H1 (cell line): ENCODE measurements at regions of chr1 and their contacts with region 1.

Region 1: GRCh38 chr1:12244078-12244477 is 14.2 kb downstream of the VPS13D start:
- DNase-seq: peak in 1 of 2 experiments; percentile 46
- H3K4me3 ChIP-seq: no peak overlapping the region
- H3K27ac ChIP-seq: no peak overlapping the region
- H3K4me1 ChIP-seq: peaks cover 0 to 19% (median 6%) of the 10 kb centered on the region in 4 experiments; a peak in 5 of 7 replicates
- H3K27me3 ChIP-seq: no peaks in the 10 kb centered on the region
- CTCF ChIP-seq: peak in 2 of 3 experiments; percentile 49 to 63; a peak in 3 of 4 replicates
- EP300 ChIP-seq: no peak
- POLR2A ChIP-seq: no peak
- RAD21 ChIP-seq: peak; percentile 15 to 40; a peak in 2 of 4 replicates

Region 2: DNA sequence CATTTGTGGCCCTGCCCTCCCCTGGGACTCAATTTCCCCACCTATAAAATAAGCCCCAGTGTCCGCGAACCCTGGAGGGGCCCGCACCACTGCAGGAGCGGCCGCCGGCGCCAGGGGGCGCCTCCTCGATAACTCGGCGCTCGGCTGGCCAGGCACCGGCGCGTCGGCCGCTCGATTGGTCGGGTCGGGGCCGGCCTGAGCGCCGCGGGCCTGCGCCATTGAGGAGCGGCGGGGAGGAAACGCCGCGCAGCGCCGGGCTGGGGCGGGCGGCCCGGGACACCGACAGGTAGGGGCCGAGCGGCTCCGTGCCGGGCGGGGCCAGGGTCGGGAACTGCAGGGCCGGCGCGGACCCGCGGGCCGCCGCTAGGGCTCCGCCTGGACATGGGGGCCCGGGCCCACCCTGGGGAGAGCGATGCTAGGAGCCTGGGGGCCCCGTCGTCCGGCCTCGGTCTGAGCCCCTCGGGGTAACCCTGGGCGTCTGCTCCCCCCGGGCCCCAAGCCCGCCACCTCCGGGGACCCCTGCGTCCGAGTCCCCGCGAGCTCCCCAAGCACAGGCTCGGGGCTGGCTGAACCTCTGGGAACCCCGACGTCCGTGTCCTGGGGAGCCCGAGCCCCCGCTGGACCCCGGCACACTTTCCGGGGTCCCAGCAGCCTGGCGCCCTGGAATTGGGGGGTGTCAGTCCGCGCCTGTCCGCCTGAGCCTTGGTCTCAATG is 14.1 kb before region 1 on chr1 and contains the start of gene VPS13D:
- CTCF ChIA-PET with region 1: interaction called, 24 read pairs
- POLR2A ChIA-PET with region 1: no interaction called
- DNase-seq: peak; percentile 33 to 94
- H3K4me3 ChIP-seq: peak within 1 kb of the TSS; percentile 55 to 95 (median 66)
- H3K27ac ChIP-seq: no peak within 1 kb of the TSS
- H3K4me1 ChIP-seq: peaks cover 0 to 7% (median 3%) of the 10 kb centered on the region in 4 experiments; a peak in 4 of 7 replicates
- H3K27me3 ChIP-seq: no peaks in the 10 kb centered on the region; a peak in 1 of 7 replicates
- CTCF ChIP-seq: peak; percentile 83 to 92 (median 88)
- EP300 ChIP-seq: peak in 1 of 2 experiments; percentile 76; a peak in 1 of 3 replicates
- POLR2A ChIP-seq: no peak
- RAD21 ChIP-seq: no peak; a peak in 1 of 4 replicates
- total RNA-seq, gene VPS13D: 31.2 and 32.7 TPM in 2 replicates

Region 3: DNA sequence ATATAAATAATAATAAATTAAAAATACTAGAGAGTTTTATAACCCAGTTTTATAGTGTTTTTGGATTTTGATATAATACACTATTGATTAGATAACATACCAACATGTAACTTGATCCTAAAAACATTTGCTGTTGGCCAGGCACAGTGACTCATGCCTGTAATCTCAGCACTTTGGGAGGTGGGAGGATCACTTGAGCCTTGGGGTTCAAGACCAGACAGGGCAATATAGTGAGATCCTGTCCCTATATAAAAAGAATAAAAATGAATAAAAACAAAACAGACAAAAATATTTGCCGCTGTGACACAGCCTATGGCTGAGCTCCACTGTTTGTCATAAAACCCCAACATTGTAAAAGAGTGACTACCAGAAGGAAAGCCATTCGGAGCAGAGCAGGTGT is 11.8 kb after region 1 on chr1:
- CTCF ChIA-PET with region 1: interaction called, 15 read pairs
- POLR2A ChIA-PET with region 1: no interaction called
- DNase-seq: no peak
- H3K4me3 ChIP-seq: no peak overlapping the region
- H3K27ac ChIP-seq: no peak overlapping the region
- H3K4me1 ChIP-seq: no peaks in the 10 kb centered on the region
- H3K27me3 ChIP-seq: no peaks in the 10 kb centered on the region
- CTCF ChIP-seq: no peak
- EP300 ChIP-seq: no peak
- POLR2A ChIP-seq: no peak
- RAD21 ChIP-seq: no peak